Gastrocnemius medialis (tissue), 4 donors: ENCODE measurements at regions of chrX and their contacts with region 1.

Region 1: DNA sequence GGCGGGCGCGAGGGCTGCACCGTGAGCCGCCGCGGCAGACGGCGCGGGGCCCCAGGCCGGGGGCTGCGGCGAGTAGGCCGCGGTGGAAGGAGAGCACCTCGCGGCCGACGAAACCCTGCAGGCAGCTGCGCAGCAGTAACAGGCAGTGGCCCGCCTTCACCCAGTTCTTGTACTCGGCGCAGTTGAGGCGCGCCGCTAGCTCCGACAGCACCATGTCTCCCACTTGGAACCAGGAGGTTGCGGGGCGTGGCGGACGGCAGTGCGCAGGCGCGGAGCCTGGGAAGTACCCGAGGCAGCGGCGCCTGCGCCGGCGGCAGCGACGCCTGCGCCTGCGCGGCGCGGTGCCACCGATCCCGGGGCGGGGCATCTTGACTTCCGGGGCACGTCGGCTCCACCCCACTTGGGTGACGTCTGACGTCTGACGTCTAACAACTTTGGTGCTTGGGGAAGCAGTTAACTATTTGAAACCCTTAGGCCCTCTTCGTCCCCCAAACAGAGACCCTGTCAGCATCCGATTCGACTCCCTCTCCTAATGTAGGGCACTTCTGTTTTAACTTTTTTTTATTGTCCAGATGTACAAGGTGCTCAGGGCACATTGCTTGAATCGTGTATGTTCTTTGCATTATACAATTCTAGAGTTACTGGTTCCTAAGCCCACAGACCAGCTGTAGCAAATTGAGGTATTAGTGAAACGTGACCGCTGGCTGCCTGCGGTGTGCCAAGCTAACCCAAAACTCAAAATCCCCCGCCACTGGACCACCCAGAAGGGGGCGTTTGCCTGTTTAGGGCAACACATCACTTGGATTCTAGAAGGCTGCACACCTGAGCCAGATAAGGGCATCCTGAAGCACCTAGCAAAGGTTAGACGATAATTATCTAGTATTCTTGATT is at the start of gene CXorf38:
- DNase-seq: peak; percentile 72 to 89
- ATAC-seq: peak; percentile 81 to 86
- H3K4me3 ChIP-seq: peak within 1 kb of the TSS; percentile 67 to 75 (median 73)
- H3K27ac ChIP-seq: peak within 1 kb of the TSS; percentile 79 to 91 (median 84)
- H3K4me1 ChIP-seq: peaks cover 14 to 17% of the 10 kb centered on the region in 2 donors
- H3K27me3 ChIP-seq: no peaks in the 10 kb centered on the region
- CTCF ChIP-seq: no peak
- POLR2A ChIP-seq: peak; percentile 63 to 68
- total RNA-seq, gene CXorf38: 4.1 to 8.7 (median 5.8) TPM

Region 2: DNA sequence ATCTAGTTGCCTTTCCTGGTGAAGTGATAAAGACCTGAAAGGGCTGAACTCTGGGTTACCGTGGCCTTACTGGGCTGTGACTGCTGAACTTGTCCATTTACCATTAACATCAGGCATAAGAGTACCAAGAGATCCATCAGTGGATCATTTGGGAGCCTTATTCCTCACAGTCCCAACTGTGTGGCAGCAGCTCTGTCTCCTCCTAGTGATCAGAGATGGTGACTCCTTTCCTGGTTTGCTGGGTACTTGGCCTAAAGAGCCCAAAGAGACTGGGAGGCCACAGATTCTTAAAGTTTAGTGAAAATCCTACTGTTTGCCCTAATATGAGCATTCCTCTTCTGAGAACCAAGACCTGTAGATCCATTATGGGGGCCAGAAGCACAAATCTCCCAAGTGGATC is 123.1 kb before region 1 on chrX:
- in situ Hi-C with region 1: no loop called
- intact Hi-C with region 1: no loop called
- DNase-seq: no peak
- ATAC-seq: no peak
- H3K4me3 ChIP-seq: no peak overlapping the region
- H3K27ac ChIP-seq: no peak overlapping the region
- H3K4me1 ChIP-seq: no peaks in the 10 kb centered on the region
- H3K27me3 ChIP-seq: no peaks in the 10 kb centered on the region
- CTCF ChIP-seq: no peak
- POLR2A ChIP-seq: no peak

Region 3: GRCh38 chrX:40543661-40544328 is 103.8 kb before region 1 on chrX:
- in situ Hi-C with region 1: no loop called
- intact Hi-C with region 1: no loop called
- DNase-seq: no peak
- ATAC-seq: peak in 1 of 2 donors; percentile 46
- H3K4me3 ChIP-seq: peak overlapping the region in 1 of 4 donors; percentile 2
- H3K27ac ChIP-seq: no peak overlapping the region
- H3K4me1 ChIP-seq: no peaks in the 10 kb centered on the region
- H3K27me3 ChIP-seq: peaks cover 0 to 2% (median 0%) of the 10 kb centered on the region in 3 donors
- CTCF ChIP-seq: peak; percentile 52 to 88 (median 65)
- POLR2A ChIP-seq: no peak

Region 4: DNA sequence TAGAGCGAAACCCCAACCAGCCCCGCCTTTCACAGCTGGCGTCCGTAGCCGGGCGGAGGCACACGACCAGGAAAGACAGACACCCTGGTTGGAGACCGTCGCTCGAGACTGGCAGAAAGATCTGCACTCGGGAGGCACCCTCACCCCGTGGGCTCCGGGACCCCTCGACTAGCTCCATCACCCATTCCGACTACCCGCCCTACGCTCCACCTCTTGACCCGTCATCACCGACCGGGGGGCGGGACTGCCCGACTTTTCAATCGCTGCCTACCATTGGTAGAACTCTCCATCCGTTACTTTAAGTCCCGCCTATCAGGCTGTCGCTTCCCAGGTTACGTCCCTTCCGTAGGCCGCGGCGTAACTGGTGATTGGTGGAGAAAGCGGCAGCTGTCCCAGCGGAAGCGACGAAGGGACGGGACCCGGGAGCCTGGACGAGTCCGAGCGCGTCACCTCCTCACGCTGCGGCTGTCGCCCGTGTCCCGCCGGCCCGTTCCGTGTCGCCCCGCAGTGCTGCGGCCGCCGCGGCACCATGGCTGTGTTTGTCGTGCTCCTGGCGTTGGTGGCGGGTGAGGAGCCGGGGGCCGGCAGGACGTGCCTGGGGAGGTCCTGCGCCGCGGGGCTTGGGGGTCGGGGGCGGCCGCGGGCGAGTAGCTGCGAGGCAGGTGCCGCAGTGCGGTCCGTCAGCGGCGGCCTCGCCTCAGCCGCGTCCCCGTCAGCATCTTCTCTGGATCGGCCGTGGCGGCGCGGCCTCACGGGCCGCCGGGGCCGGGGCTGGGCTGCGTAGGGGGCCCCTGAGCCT is 66.8 kb before region 1 on chrX and contains the start of gene ATP6AP2:
- in situ Hi-C with region 1: no loop called
- intact Hi-C with region 1: loop called (anchors 5 kb)
- DNase-seq: peak; percentile 91 to 93
- ATAC-seq: peak; percentile 98 to 100
- H3K4me3 ChIP-seq: peak within 1 kb of the TSS; percentile 65 to 73 (median 70)
- H3K27ac ChIP-seq: peak within 1 kb of the TSS; percentile 84 to 93 (median 92)
- H3K4me1 ChIP-seq: peaks cover 0 to 4% of the 10 kb centered on the region in 2 donors
- H3K27me3 ChIP-seq: peaks cover 0 to 5% (median 0%) of the 10 kb centered on the region in 3 donors
- CTCF ChIP-seq: no peak
- POLR2A ChIP-seq: peak; percentile 81 to 85
- total RNA-seq, gene ATP6AP2: 23.2 to 40.1 (median 31.5) TPM

Region 5: GRCh38 chrX:40749681-40750494 is 102.3 kb after region 1 on chrX:
- in situ Hi-C with region 1: loop called in 1 of 4 experiments (anchors 10 kb)
- intact Hi-C with region 1: no loop called
- DNase-seq: no peak
- ATAC-seq: no peak
- H3K4me3 ChIP-seq: no peak overlapping the region
- H3K27ac ChIP-seq: peak overlapping the region; percentile 44 to 67 (median 50)
- H3K4me1 ChIP-seq: peaks cover 2 to 4% of the 10 kb centered on the region in 2 donors
- H3K27me3 ChIP-seq: no peaks in the 10 kb centered on the region
- CTCF ChIP-seq: no peak
- POLR2A ChIP-seq: no peak

Region 6: GRCh38 chrX:40867352-40867751 is 219.8 kb after region 1 on chrX:
- in situ Hi-C with region 1: no loop called
- intact Hi-C with region 1: loop called (anchors 5 kb)
- DNase-seq: no peak
- ATAC-seq: peak in 1 of 2 donors; percentile 63
- H3K4me3 ChIP-seq: no peak overlapping the region
- H3K27ac ChIP-seq: peak overlapping the region; percentile 50 to 75 (median 66)
- H3K4me1 ChIP-seq: peaks cover 12 to 13% of the 10 kb centered on the region in 2 donors
- H3K27me3 ChIP-seq: no peaks in the 10 kb centered on the region
- CTCF ChIP-seq: no peak
- POLR2A ChIP-seq: no peak

Region 7: GRCh38 chrX:41084044-41084892 is 436.7 kb after region 1 on chrX:
- in situ Hi-C with region 1: no loop called
- intact Hi-C with region 1: loop called (anchors 1 kb)
- DNase-seq: peak; percentile 91 to 97
- ATAC-seq: peak; percentile 73 to 76
- H3K4me3 ChIP-seq: peak overlapping the region; percentile 72 to 93 (median 86)
- H3K27ac ChIP-seq: peak overlapping the region; percentile 91 to 100 (median 96)
- H3K4me1 ChIP-seq: peaks cover 10 to 27% of the 10 kb centered on the region in 2 donors
- H3K27me3 ChIP-seq: no peaks in the 10 kb centered on the region
- CTCF ChIP-seq: peak in 2 of 5 experiments; percentile 48 to 52
- POLR2A ChIP-seq: peak; percentile 90 to 91

Region 8: DNA sequence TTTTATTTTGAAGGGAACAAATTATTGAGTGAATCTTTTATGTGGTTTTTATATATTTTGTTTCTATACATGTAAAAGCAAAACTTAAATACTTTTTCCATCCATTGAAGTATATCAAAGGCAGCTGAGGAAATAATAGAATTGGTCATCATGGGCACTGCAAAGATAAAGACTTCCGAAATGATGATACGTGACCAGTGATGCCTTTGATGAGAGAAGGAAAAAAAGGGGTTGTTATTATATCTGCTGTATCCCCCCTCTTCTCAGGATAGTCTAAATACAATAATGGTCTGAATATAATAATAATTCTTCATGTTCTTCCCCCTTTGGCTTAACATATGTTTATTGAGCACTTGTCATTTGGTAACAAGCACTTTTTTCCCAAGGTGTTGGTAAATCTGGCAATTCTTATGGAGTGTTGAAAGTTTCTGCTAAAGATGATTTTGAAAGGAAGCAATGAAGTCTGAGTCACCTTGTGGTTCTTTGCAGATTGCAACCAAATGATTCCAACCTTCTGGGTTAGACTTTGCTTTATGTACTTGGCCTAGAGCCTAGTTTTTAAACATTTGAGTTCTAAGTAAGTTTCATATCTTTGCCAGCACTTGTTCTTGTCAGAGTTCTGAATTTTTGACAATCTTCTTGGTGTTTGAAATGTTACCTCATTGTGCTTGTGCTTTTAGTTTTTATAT is 498.5 kb after region 1 on chrX:
- in situ Hi-C with region 1: no loop called
- intact Hi-C with region 1: no loop called
- DNase-seq: no peak
- ATAC-seq: no peak
- H3K4me3 ChIP-seq: no peak overlapping the region
- H3K27ac ChIP-seq: no peak overlapping the region
- H3K4me1 ChIP-seq: no peaks in the 10 kb centered on the region
- H3K27me3 ChIP-seq: no peaks in the 10 kb centered on the region
- CTCF ChIP-seq: no peak
- POLR2A ChIP-seq: no peak

Region 9: GRCh38 chrX:41250867-41251266 is 603.3 kb after region 1 on chrX:
- in situ Hi-C with region 1: loop called in 1 of 4 experiments (anchors 10 kb)
- intact Hi-C with region 1: loop called (anchors 5 kb)
- DNase-seq: no peak
- ATAC-seq: no peak
- H3K4me3 ChIP-seq: no peak overlapping the region
- H3K27ac ChIP-seq: no peak overlapping the region
- H3K4me1 ChIP-seq: peaks cover 0 to 5% of the 10 kb centered on the region in 2 donors
- H3K27me3 ChIP-seq: peaks cover 0 to 5% (median 4%) of the 10 kb centered on the region in 3 donors
- CTCF ChIP-seq: no peak
- POLR2A ChIP-seq: no peak

Region 10: DNA sequence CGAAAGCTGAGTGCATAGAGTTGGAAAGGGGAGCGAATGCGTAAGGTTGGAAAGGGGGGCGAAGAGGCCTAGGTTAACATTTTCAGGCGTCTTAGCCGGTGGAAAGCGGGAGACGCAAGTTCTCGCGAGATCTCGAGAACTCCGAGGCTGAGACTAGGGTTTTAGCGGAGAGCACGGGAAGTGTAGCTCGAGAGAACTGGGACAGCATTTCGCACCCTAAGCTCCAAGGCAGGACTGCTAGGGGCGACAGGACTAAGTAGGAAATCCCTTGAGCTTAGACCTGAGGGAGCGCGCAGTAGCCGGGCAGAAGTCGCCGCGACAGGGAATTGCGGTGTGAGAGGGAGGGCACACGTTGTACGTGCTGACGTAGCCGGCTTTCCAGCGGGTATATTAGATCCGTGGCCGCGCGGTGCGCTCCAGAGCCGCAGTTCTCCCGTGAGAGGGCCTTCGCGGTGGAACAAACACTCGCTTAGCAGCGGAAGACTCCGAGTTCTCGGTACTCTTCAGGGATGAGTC is 686.2 kb after region 1 on chrX and contains the start of gene DDX3X:
- in situ Hi-C with region 1: loop called in 1 of 4 experiments (anchors 10 kb)
- intact Hi-C with region 1: loop called (anchors 2 kb)
- DNase-seq: peak; percentile 62 to 80
- ATAC-seq: peak; percentile 76 to 79
- H3K4me3 ChIP-seq: peak within 1 kb of the TSS; percentile 73 to 96 (median 84)
- H3K27ac ChIP-seq: peak within 1 kb of the TSS; percentile 93 to 99 (median 98)
- H3K4me1 ChIP-seq: peaks cover 11 to 32% of the 10 kb centered on the region in 2 donors
- H3K27me3 ChIP-seq: no peaks in the 10 kb centered on the region
- CTCF ChIP-seq: peak in 4 of 5 experiments; percentile 5 to 51 (median 42)
- POLR2A ChIP-seq: peak; percentile 99
- total RNA-seq, gene DDX3X: 196 to 331 (median 272) TPM